ENCODE measurements at regions of chr4 and their contacts with region 1.

Region 1: DNA sequence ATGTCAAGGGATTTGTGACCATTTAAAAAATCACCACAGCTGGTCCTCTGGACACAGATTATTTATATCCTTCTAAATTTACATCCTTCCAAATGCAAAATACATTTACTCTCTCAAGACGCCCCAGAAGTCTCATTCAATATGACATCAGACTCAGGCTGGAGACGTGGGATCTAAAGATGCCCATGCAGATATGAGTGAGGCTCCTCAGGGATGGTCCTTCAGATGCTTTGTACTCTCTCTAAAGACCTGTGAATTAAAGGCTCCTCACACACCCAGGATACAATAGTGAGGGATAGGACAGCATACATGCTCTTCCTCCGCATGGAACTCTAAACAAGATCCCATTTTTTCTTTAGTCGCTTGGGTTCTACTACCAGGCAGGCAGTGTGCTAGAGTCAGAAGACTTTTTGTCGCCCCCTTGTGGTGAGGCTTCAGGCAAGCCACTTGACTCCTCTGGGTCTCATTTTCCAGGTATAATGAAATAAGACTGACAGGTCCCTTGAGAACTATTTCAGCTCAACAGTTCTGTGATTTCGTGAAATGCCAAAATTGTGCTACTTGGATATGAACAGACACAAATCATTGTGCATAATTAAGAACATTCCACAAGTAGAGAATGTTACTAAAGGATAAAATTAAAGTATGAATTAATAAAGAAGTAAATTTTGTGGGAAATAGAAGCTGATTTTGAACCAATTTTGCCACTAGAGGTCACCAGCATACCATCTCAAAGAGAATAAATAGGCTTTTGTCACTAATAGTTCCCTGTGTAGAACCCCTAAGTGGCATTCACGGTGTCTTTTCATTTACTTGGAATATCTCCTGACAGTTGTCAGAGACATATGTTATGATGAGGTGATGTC is 13.7 kb upstream of the SCOC start:
- DNase-seq: peak in 4 of 5 donors; percentile 84 to 94 (median 92)
- H3K4me3 ChIP-seq: no peak overlapping the region
- H3K27ac ChIP-seq: no peak overlapping the region
- H3K4me1 ChIP-seq: peaks cover 0 to 4% (median 0%) of the 10 kb centered on the region in 3 donors
- H3K27me3 ChIP-seq: no peaks in the 10 kb centered on the region
- CTCF ChIP-seq: peak; percentile 76

Region 2: DNA sequence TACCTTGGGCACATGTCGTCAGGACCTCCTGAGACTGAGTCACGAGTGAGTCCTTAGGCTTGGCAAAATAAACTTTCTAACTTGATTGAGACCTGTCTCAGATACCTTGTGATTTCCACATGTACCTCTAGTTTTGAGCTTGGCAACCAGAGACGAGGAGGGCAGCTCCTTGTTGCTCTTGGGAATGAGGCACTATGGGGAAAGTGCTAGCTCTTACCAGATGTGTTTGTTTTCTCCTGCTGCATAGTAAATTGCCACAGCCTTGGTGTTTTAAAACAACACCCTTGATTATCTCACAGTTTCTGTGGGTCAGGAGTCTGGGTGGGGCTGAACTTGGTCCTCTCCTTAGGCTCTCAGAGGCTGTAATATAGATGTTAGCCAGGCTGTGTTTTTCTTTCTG is 146.7 kb before region 1 on chr4:
- intact Hi-C with region 1: no loop called
- DNase-seq: no peak
- H3K4me3 ChIP-seq: no peak overlapping the region
- H3K27ac ChIP-seq: no peak overlapping the region
- H3K4me1 ChIP-seq: no peaks in the 10 kb centered on the region
- H3K27me3 ChIP-seq: no peaks in the 10 kb centered on the region
- CTCF ChIP-seq: no peak

Region 3: DNA sequence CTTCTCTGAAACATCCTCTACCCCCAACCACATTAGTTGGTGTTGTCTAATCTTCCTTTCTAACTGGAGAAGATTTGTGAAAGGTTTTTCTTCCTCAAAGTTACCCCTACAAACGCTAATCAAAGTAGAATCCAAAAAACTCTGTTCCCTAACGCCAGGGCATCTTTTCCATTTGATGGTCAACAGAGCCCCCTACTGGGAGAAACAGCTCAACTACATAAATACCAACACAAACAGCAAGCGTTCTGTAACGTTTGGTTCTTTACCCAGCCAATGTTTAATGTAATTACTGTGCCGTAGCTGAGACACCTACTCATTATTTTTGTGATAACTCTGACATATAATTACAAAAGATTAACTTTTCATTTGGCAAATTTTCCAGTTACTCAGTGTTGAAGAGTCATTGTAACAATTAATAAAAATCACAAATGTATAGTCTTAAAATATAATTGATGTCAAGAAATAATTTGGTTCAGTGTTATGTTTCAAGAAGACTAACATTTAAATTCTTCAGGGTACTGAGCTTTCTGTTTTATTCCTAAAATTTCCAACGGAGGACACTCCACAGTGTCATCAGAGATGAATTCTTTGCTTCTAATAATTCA is 491.3 kb after region 1 on chr4:
- intact Hi-C with region 1: loop called (anchors 10 kb)
- DNase-seq: peak in 4 of 5 donors; percentile 57 to 90 (median 80)
- H3K4me3 ChIP-seq: no peak overlapping the region
- H3K27ac ChIP-seq: no peak overlapping the region
- H3K4me1 ChIP-seq: no peaks in the 10 kb centered on the region
- H3K27me3 ChIP-seq: no peaks in the 10 kb centered on the region
- CTCF ChIP-seq: peak; percentile 89

Measured in kidney (tissue), 22 donors.